SK-N-SH (cell line): ENCODE measurements at regions of chr9 and their contacts with region 1.

Region 1: GRCh38 chr9:117387422-117387821 is 27.4 kb downstream of the ASTN2 start:
- DNase-seq: peak; percentile 47
- H3K4me3 ChIP-seq: no peak overlapping the region
- H3K27ac ChIP-seq: peak overlapping the region in 1 of 2 experiments; percentile 95; a peak in 2 of 4 replicates
- H3K4me1 ChIP-seq: peaks cover 0 to 26% of the 10 kb centered on the region in 2 experiments; a peak in 2 of 4 replicates
- H3K27me3 ChIP-seq: no peaks in the 10 kb centered on the region
- CTCF ChIP-seq: no peak
- EP300 ChIP-seq: peak in 1 of 2 experiments; percentile 91; a peak in 2 of 4 replicates
- RAD21 ChIP-seq: peak; percentile 18; the same call in 1 of the 2 replicates

Region 2: DNA sequence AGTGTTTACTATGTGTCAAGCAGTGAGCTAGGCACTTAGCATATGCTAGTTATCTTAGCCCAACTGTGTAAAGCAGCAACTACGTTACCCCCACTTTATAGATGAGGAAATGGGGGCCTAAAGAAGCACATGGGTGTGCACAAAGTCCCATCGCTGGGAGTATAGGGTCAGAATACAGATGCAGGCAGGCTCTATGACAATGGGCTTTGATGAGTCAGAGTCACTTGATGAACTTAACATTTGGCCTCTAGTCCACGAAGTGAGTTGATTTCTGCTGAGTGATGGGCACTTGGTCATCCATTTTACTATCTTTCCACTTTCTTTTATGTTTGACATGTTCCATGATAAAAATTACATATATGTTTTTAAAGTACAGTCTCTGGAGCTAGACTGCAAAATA is 496.0 kb before region 1 on chr9:
- CTCF ChIA-PET with region 1: no interaction called
- POLR2A ChIA-PET with region 1: no interaction called
- DNase-seq: no peak
- H3K4me3 ChIP-seq: no peak overlapping the region
- H3K27ac ChIP-seq: no peak overlapping the region
- H3K4me1 ChIP-seq: no peaks in the 10 kb centered on the region
- H3K27me3 ChIP-seq: no peaks in the 10 kb centered on the region
- CTCF ChIP-seq: no peak
- EP300 ChIP-seq: no peak
- RAD21 ChIP-seq: no peak

Region 3: GRCh38 chr9:117377046-117377634 is 10.3 kb before region 1 on chr9:
- CTCF ChIA-PET with region 1: interaction called, 11 read pairs
- POLR2A ChIA-PET with region 1: interaction called, 3 read pairs
- DNase-seq: peak; percentile 6
- H3K4me3 ChIP-seq: no peak overlapping the region
- H3K27ac ChIP-seq: peak overlapping the region in 1 of 2 experiments; percentile 65; a peak in 2 of 4 replicates
- H3K4me1 ChIP-seq: peaks cover 0 to 28% of the 10 kb centered on the region in 2 experiments; a peak in 2 of 4 replicates
- H3K27me3 ChIP-seq: no peaks in the 10 kb centered on the region
- CTCF ChIP-seq: no peak
- EP300 ChIP-seq: no peak
- RAD21 ChIP-seq: no peak